Activated CD8-positive, alpha-beta T cell treated with anti-CD3 and anti-CD28 coated beads for 36 hours (primary cell): ENCODE measurements at regions of chr11 and their contacts with region 1.

Region 1: GRCh38 chr11:94897330-94897768 is 76.0 kb downstream of the CWC15 start:
- DNase-seq: peak; percentile 69
- ATAC-seq: peak; percentile 65
- H3K4me3 Mint-ChIP-seq: no peak overlapping the region
- H3K27ac Mint-ChIP-seq: no peak overlapping the region
- H3K4me1 Mint-ChIP-seq: no peaks in the 10 kb centered on the region
- H3K27me3 Mint-ChIP-seq: no peaks in the 10 kb centered on the region
- CTCF ChIP-seq: peak; percentile 84

Region 2: DNA sequence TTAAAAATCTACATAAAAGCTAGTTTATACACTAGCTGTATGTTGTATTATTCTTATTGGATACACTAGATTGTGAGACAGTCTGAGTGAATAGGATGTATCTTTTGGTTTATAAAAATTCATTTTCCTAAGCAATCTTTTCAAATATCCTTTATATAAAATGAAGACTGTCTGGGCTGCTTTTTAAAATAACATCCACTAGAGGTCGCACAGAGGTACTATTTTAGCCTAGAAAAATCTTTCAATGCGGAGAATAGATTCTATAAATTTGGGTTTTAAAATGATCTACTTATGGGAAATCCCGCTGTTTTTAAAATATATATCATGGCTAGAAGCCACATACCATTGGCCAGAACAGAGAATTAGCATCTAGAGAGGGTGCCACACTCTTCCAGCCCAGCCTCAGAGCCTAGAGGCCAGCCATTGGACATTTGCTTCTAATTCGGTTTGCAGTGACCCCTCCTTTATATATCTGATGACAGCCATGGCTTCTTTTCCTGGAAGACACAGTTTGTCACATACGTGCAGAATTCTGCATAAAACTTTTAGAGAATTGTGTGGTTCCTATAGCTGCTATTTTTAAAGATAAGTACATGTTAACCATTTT is 377.8 kb before region 1 on chr11:
- CTCF ChIA-PET with region 1: interaction called, 3 read pairs
- POLR2A ChIA-PET with region 1: no interaction called
- intact Hi-C with region 1: loop called (anchors 5 kb)
- DNase-seq: peak; percentile 26
- ATAC-seq: no peak
- H3K4me3 Mint-ChIP-seq: no peak overlapping the region
- H3K27ac Mint-ChIP-seq: no peak overlapping the region
- H3K4me1 Mint-ChIP-seq: no peaks in the 10 kb centered on the region
- H3K27me3 Mint-ChIP-seq: no peaks in the 10 kb centered on the region
- CTCF ChIP-seq: peak; percentile 69

Region 3: GRCh38 chr11:94776351-94777321 is 120.7 kb before region 1 on chr11:
- CTCF ChIA-PET with region 1: interaction called, 3 read pairs
- POLR2A ChIA-PET with region 1: no interaction called
- intact Hi-C with region 1: loop called (anchors 5 kb)
- DNase-seq: no peak
- ATAC-seq: no peak
- H3K4me3 Mint-ChIP-seq: no peak overlapping the region
- H3K27ac Mint-ChIP-seq: no peak overlapping the region
- H3K4me1 Mint-ChIP-seq: peaks cover 9% of the 10 kb centered on the region
- H3K27me3 Mint-ChIP-seq: peaks cover 13% of the 10 kb centered on the region
- CTCF ChIP-seq: no peak

Region 4: GRCh38 chr11:94794287-94795168 is 102.8 kb before region 1 on chr11:
- CTCF ChIA-PET with region 1: interaction called, 5 read pairs
- POLR2A ChIA-PET with region 1: no interaction called
- intact Hi-C with region 1: loop called (anchors 5 kb)
- DNase-seq: no peak
- ATAC-seq: no peak
- H3K4me3 Mint-ChIP-seq: no peak overlapping the region
- H3K27ac Mint-ChIP-seq: no peak overlapping the region
- H3K4me1 Mint-ChIP-seq: no peaks in the 10 kb centered on the region
- H3K27me3 Mint-ChIP-seq: peaks cover 3% of the 10 kb centered on the region
- CTCF ChIP-seq: no peak

Region 5: DNA sequence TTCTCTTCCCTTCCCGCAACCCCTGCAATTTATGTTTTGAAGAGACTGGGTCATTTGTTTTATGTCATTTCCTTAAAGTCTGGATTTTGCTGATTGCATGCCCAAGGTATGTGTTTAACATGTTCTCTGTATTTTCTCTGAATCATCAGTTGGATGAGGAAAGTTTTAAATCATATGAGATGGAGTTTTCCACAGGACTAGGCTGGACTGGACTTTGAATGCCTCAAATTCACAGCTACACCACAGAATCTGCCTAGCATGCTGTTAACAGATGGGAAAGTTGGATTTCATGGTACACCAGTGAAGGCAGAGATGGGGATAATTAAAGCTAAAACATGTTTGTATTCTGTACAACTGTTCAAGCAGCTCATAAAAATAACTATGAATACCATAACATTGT is 13.4 kb after region 1 on chr11:
- CTCF ChIA-PET with region 1: interaction called, 17 read pairs
- POLR2A ChIA-PET with region 1: no interaction called
- intact Hi-C with region 1: no loop called
- DNase-seq: no peak
- ATAC-seq: no peak
- H3K4me3 Mint-ChIP-seq: no peak overlapping the region
- H3K27ac Mint-ChIP-seq: no peak overlapping the region
- H3K4me1 Mint-ChIP-seq: no peaks in the 10 kb centered on the region
- H3K27me3 Mint-ChIP-seq: no peaks in the 10 kb centered on the region
- CTCF ChIP-seq: no peak

Region 6: DNA sequence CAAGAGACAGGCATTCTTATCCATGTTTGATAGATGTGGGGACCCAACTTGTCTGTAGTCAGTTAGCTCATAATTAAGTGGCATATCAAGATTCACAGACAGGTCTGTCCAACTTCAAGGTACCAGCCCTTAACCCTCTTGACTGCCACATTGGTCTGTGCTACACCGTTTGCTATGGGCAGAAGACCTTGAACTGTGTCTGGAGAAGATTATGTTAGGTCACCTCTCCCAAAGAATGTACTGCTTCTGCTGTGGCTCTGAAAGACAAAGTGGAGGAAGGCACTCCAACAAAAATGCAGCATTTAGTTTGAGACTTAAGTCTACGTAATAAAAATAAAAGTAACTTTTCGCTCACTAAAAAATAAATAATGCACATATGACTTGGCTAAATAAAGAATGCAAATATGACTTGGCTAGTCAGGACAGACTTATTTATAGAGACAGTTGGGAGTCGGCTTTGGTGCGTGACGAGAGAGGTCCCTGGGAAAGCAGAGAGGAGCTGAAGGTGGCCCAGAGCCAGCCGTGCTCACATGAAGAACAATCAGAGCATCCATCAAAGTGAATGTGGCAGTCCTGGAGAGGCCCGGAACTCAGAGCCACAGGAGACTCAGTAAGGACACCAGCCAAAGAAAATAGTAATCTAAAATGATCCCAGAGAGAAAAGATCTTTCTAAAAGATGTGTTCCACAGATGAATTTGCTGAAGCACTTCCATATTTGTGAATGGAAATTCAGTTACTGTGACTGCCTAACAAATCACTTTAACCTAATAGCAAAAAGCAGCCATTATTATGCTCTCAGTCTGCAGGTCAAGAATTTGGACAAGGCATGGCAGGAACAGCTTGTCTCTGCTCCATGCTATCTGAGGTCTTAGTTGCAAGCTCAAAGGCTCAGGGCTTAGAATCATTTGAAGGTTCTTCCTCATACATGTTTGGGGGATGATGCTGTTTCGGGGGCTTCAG is 41.0 kb after region 1 on chr11:
- CTCF ChIA-PET with region 1: no interaction called
- POLR2A ChIA-PET with region 1: no interaction called
- intact Hi-C with region 1: no loop called
- DNase-seq: no peak
- ATAC-seq: no peak
- H3K4me3 Mint-ChIP-seq: no peak overlapping the region
- H3K27ac Mint-ChIP-seq: no peak overlapping the region
- H3K4me1 Mint-ChIP-seq: peaks cover 25% of the 10 kb centered on the region
- H3K27me3 Mint-ChIP-seq: no peaks in the 10 kb centered on the region
- CTCF ChIP-seq: no peak